ENCODE measurements at regions of chr6 and their contacts with region 1.

Region 1: DNA sequence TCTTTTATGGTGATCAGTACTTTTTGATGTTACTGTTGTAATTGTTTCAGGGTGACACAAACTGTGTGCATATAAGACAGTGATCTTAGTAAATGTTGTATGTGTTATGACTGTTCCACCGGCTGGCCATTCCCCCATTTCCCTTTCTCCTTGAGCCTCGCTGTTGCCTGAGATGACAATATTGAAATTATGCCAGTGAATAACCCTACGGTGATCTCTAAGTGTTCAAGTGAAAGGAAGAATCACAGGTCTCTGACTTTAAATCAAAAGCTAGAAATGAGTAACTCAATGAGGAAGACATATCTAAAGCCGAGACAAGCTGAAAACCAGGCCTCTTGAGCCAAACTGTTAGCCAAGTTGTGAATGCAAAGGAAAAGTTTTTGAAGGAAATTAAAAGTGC is 32.3 kb downstream of the TULP4 start:
- DNase-seq: no peak
- H3K4me3 Mint-ChIP-seq: no peak overlapping the region
- H3K27ac Mint-ChIP-seq: no peak overlapping the region
- H3K4me1 Mint-ChIP-seq: peaks cover 12% of the 10 kb centered on the region
- H3K27me3 Mint-ChIP-seq: no peaks in the 10 kb centered on the region

Region 2: DNA sequence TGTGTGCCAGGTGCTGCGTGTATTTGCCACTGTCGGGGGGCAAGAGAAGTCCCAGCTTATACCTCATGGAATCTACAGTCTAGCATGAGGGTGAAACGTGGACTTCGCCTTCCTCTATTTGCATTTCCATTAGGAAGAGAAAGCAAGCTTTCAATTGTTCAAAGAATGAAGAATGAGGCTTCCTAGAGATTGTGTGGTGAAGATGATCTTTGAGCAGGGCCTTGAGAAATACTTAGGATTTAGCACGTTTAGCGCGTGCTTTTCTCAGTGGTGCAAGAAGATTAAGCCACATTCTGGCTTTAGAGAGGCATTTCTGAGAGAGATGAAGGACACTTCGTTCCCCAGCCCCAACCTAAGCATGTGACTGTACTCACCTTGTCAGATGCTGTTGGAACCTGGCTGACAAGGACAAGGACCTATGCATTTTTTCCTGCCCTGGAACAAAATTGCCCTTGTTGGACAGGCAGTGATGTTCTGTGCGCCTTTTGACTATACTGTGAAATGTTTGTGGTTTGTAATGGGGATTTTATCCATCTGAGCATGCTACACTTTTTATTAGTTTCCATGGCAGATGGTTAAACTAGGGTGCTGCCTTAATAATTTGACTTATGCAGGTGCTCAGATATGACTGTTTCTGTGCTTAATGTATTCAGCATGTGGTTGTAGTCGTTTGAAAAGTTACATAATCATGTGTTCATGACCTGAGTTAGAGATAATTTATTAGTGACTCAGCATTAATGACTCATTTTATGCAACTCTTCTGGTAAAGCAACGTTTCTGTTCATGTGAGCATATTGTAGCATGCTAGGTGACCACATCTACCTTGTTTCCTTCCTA is 21.6 kb before region 1 on chr6:
- intact Hi-C with region 1: loop called (anchors 2 kb)
- DNase-seq: no peak
- H3K4me3 Mint-ChIP-seq: no peak overlapping the region
- H3K27ac Mint-ChIP-seq: peak overlapping the region; percentile 25
- H3K4me1 Mint-ChIP-seq: peaks cover 33% of the 10 kb centered on the region
- H3K27me3 Mint-ChIP-seq: no peaks in the 10 kb centered on the region

Region 3: GRCh38 chr6:158460602-158461169 is 116.2 kb after region 1 on chr6:
- intact Hi-C with region 1: no loop called
- DNase-seq: no peak
- H3K4me3 Mint-ChIP-seq: no peak overlapping the region
- H3K27ac Mint-ChIP-seq: no peak overlapping the region
- H3K4me1 Mint-ChIP-seq: peaks cover 4% of the 10 kb centered on the region
- H3K27me3 Mint-ChIP-seq: no peaks in the 10 kb centered on the region